WTC11 (cell line): ENCODE measurements at regions of chr20 and their contacts with region 1.

Region 1: DNA sequence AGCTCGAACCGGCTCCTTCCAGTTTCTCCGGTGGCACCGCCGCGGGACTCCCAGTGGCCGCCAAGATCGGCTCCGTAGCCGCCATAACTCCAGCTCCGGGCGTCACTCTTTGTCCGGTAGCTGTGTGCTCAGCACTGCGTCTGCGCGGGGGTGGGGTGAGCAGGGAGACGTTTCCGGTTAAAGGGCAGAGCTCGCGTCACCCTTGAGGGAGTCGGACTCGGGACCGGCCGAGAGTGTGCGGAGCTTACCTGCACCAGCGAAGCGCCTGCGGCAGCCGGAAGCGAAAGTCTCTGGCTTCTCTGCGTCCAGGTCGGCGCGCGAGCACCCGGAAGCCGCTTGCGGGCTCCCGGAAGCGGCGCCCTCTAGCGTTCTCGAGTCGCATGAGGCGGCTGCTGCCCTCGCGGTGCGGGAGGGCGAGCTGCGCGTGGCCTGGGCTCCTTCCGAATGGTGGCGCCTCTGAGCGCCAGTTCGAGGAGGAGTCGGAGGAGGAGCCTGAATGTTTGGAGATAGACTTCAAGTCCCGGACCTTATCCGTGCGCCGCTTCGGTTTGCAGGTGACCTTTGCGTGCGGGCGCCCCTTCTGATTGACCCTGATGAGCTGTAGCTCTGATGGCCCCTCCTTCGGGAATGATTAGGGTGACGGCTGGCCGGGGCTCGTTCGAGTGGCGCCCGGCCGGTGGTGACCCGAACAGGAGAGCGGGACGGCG is at the start of gene SCAND1:
- DNase-seq: peak; percentile 96
- ATAC-seq: peak; percentile 96
- H3K4me3 Mint-ChIP-seq: peak within 1 kb of the TSS; percentile 98
- H3K27ac Mint-ChIP-seq: peak within 1 kb of the TSS; percentile 99
- H3K4me1 Mint-ChIP-seq: peaks cover 10% of the 10 kb centered on the region
- H3K27me3 Mint-ChIP-seq: peaks cover 3% of the 10 kb centered on the region
- CTCF ChIP-seq: peak; percentile 45
- total RNA-seq, gene SCAND1: 94.2 to 103 TPM (median 94.6 TPM) in 3 replicates

Region 2: DNA sequence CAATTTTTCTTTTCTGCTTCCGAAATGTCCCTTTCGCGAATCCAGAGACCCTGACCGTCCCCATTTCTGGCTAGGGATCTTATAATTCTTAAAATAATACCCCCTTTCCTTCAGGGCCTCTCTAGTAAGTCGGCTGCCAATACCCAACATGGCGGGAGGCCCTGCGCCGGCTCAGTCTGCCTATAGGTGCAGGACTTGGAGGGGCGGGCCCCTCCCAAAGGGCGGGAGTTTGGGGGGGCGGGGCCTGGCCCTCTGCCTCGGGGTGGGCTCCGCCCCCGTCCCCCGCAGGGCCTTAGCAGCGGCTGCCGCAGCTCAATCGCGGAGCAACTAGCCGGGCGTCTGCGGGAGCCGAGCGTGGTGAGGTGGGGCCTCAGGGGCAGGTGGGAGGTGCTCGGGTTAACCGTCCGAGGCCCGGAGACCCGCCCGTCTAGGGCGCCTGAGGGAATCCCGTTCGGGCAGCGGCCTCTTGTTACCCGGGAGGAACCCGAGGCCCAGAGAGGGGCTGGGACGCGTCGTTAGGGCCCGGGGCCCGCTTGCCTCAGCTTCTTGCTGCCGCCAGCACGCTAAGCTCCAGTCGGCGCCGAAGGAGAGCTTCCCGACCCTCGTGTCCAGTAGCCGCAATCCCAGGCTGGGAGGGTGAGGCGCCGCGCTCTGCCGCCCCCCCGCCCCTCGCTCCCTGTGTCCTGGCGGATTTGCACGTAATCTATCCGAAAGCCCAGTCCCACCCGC is 499.3 kb before region 1 on chr20 and contains the start of gene CEP250:
- CTCF ChIA-PET with region 1: no interaction called
- POLR2A ChIA-PET with region 1: interaction called, 10 read pairs
- DNase-seq: peak; percentile 97
- ATAC-seq: peak; percentile 92
- H3K4me3 Mint-ChIP-seq: peak within 1 kb of the TSS; percentile 90
- H3K27ac Mint-ChIP-seq: peak within 1 kb of the TSS; percentile 99
- H3K4me1 Mint-ChIP-seq: peaks cover 32% of the 10 kb centered on the region
- H3K27me3 Mint-ChIP-seq: no peaks in the 10 kb centered on the region
- CTCF ChIP-seq: no peak
- total RNA-seq, gene CEP250: 63.1 to 66.9 TPM (median 65.8 TPM) in 3 replicates

Region 3: GRCh38 chr20:35619196-35620095 is 334.9 kb before region 1 on chr20:
- CTCF ChIA-PET with region 1: interaction called, 25 read pairs
- POLR2A ChIA-PET with region 1: interaction called, 6 read pairs
- DNase-seq: peak; percentile 96
- ATAC-seq: peak; percentile 72
- H3K4me3 Mint-ChIP-seq: peak overlapping the region; percentile 89
- H3K27ac Mint-ChIP-seq: peak overlapping the region; percentile 86; the same call in 1 of the 2 replicates
- H3K4me1 Mint-ChIP-seq: peaks cover 15% of the 10 kb centered on the region
- H3K27me3 Mint-ChIP-seq: peaks cover 18% of the 10 kb centered on the region
- CTCF ChIP-seq: no peak; the same call in 1 of the 2 replicates

Region 4: GRCh38 chr20:35735828-35736470 is 218.4 kb before region 1 on chr20:
- CTCF ChIA-PET with region 1: no interaction called
- POLR2A ChIA-PET with region 1: no interaction called
- DNase-seq: no peak
- ATAC-seq: no peak
- H3K4me3 Mint-ChIP-seq: no peak overlapping the region
- H3K27ac Mint-ChIP-seq: no peak overlapping the region
- H3K4me1 Mint-ChIP-seq: peaks cover 22% of the 10 kb centered on the region
- H3K27me3 Mint-ChIP-seq: no peaks in the 10 kb centered on the region
- CTCF ChIP-seq: no peak

Region 5: DNA sequence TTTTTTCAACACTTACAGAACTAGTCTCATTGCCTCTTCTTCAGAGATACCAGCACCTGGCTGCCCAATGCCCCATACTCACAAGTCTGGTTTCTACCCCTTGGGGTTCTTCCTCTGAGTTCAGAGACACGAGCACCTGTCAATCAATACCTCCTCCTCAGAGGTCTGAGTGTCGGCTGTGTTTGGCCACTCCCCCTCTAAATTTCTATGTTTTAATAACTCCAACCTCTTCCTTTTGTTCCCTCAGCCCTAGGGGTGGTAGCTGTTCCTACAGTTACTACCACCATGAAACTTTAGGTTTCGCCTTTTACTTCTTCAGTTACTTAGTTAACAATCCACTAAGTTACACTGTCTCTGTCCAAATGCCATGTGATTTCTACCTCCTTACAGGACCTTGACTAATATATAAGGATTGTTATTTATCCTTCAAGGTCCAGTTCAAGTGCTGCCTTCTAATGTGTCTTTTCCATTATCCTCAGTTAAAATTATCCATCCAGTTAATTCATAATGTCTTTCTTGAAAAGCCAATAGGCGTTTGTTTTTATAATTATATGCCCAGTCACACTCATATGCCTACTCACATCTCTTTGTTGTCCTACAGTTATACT is 197.2 kb before region 1 on chr20:
- CTCF ChIA-PET with region 1: no interaction called
- POLR2A ChIA-PET with region 1: no interaction called
- DNase-seq: no peak
- ATAC-seq: no peak; the same call in 1 of the 2 replicates
- H3K4me3 Mint-ChIP-seq: no peak overlapping the region
- H3K27ac Mint-ChIP-seq: no peak overlapping the region
- H3K4me1 Mint-ChIP-seq: no peaks in the 10 kb centered on the region
- H3K27me3 Mint-ChIP-seq: no peaks in the 10 kb centered on the region
- CTCF ChIP-seq: no peak

Region 6: GRCh38 chr20:35907017-35907701 is 47.2 kb before region 1 on chr20:
- CTCF ChIA-PET with region 1: interaction called, 14 read pairs
- POLR2A ChIA-PET with region 1: no interaction called
- DNase-seq: no peak
- ATAC-seq: no peak
- H3K4me3 Mint-ChIP-seq: no peak overlapping the region
- H3K27ac Mint-ChIP-seq: peak overlapping the region; percentile 95
- H3K4me1 Mint-ChIP-seq: peaks cover 29% of the 10 kb centered on the region
- H3K27me3 Mint-ChIP-seq: no peaks in the 10 kb centered on the region
- CTCF ChIP-seq: no peak

Region 7: GRCh38 chr20:35968931-35969330 is 14.6 kb after region 1 on chr20:
- CTCF ChIA-PET with region 1: interaction called, 27 read pairs
- POLR2A ChIA-PET with region 1: interaction called, 8 read pairs
- DNase-seq: no peak
- ATAC-seq: no peak
- H3K4me3 Mint-ChIP-seq: no peak overlapping the region
- H3K27ac Mint-ChIP-seq: no peak overlapping the region
- H3K4me1 Mint-ChIP-seq: peaks cover 11% of the 10 kb centered on the region
- H3K27me3 Mint-ChIP-seq: no peaks in the 10 kb centered on the region; the same call in 1 of the 2 replicates
- CTCF ChIP-seq: no peak

Region 8: GRCh38 chr20:36093025-36093803 is 138.9 kb after region 1 on chr20:
- CTCF ChIA-PET with region 1: interaction called, 13 read pairs
- POLR2A ChIA-PET with region 1: no interaction called
- DNase-seq: no peak
- ATAC-seq: no peak
- H3K4me3 Mint-ChIP-seq: peak overlapping the region; percentile 85
- H3K27ac Mint-ChIP-seq: no peak overlapping the region
- H3K4me1 Mint-ChIP-seq: peaks cover 47% of the 10 kb centered on the region
- H3K27me3 Mint-ChIP-seq: peaks cover 92% of the 10 kb centered on the region
- CTCF ChIP-seq: no peak

Region 9: GRCh38 chr20:37243076-37243936 is 1289.0 kb after region 1 on chr20:
- CTCF ChIA-PET with region 1: no interaction called
- POLR2A ChIA-PET with region 1: interaction called, 10 read pairs
- DNase-seq: peak; percentile 56
- ATAC-seq: peak; percentile 81
- H3K4me3 Mint-ChIP-seq: no peak overlapping the region
- H3K27ac Mint-ChIP-seq: peak overlapping the region; percentile 97
- H3K4me1 Mint-ChIP-seq: peaks cover 22% of the 10 kb centered on the region
- H3K27me3 Mint-ChIP-seq: no peaks in the 10 kb centered on the region
- CTCF ChIP-seq: no peak